Left ventricle myocardium inferior (tissue), 1 donor: ENCODE measurements at regions of chr1 and their contacts with region 1.

Region 1: DNA sequence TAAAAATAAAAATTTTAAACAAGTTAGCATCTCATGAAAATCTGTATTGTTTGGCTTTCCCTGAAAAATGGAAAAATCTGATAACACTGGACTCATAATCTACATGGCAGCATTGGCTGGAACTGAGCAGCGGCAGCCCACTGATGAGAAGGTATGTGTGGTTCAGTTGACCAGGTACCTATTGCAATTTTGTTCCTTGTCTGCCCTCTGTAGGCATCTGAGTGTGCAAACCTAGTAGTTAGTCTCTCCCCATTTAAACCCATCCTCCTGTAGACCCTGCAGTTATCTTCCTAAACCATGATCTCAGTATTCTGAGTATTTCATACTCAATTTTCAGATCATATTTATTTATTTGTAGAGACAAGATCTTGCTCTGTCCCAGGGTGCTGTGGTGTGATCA is 59.4 kb upstream of the SERBP1 start:
- DNase-seq: no peak
- H3K4me3 ChIP-seq: no peak overlapping the region
- H3K27ac ChIP-seq: no peak overlapping the region
- H3K4me1 ChIP-seq: no peaks in the 10 kb centered on the region
- H3K27me3 ChIP-seq: no peaks in the 10 kb centered on the region
- CTCF ChIP-seq: peak; percentile 62

Region 2: DNA sequence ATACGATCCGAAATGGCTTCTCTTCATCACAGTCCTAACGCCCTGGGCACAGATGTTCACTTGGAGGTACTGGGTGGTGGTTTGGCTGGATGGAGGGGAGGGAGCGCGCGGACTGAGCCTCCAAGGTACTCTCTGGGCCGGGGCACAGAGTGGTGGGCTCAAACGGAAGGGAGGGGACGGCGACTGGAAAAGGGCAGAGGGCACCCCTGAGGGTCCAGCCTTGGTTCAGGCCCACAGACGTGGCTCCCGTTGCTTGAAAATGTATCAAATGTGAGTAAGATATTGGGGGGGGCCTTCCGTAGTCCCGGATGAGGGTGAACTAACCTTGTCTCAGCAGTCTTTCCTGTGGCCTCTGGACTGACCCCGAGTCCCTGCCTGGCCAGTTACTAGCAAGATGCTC is 181.5 kb before region 1 on chr1:
- intact Hi-C with region 1: no loop called
- DNase-seq: no peak
- H3K4me3 ChIP-seq: peak overlapping the region; percentile 65
- H3K27ac ChIP-seq: no peak overlapping the region
- H3K4me1 ChIP-seq: peaks cover 13% of the 10 kb centered on the region
- H3K27me3 ChIP-seq: peaks cover 48% of the 10 kb centered on the region
- CTCF ChIP-seq: no peak

Region 3: DNA sequence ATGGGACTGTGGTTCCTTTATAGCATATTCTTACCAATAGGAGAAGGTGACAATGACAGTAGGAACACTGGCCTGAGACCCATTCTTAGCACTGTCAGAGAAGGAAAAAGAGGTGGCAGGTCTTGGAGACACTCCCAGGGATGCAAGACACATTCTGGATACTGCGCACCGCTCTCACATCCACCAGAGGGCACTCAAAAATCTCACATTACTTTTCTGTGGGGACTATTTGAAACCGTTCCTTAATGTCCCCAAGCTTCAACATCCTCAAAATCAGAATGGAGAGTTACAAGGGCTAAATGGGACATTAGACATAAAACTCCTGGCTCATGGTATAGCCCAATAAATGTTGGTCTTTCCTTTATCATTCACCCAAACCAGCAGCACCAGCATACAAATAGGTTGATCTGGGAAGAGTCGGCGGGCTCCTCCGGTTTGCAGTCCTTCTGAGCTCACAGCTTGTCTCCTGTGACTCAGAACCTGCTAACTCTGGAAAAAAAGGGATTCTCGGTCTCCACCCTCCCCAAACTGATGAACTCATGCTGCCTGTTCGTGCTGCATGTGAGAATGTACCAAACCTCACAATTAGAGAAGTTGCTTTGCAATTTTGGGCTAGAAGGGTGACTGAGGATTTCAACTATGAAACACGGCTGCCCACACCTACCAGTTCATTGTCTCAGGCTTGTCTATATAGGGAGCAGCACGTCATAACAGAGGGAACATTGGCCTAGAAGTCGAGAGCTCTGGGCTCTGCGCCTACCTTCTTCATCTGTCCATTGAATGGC is 141.8 kb before region 1 on chr1:
- intact Hi-C with region 1: loop called (anchors 5 kb)
- DNase-seq: peak; percentile 20
- H3K4me3 ChIP-seq: no peak overlapping the region
- H3K27ac ChIP-seq: no peak overlapping the region
- H3K4me1 ChIP-seq: no peaks in the 10 kb centered on the region
- H3K27me3 ChIP-seq: peaks cover 6% of the 10 kb centered on the region
- CTCF ChIP-seq: peak; percentile 82